Caco-2 (cell line): ENCODE measurements at regions of chr2 and their contacts with region 1.

Region 1: DNA sequence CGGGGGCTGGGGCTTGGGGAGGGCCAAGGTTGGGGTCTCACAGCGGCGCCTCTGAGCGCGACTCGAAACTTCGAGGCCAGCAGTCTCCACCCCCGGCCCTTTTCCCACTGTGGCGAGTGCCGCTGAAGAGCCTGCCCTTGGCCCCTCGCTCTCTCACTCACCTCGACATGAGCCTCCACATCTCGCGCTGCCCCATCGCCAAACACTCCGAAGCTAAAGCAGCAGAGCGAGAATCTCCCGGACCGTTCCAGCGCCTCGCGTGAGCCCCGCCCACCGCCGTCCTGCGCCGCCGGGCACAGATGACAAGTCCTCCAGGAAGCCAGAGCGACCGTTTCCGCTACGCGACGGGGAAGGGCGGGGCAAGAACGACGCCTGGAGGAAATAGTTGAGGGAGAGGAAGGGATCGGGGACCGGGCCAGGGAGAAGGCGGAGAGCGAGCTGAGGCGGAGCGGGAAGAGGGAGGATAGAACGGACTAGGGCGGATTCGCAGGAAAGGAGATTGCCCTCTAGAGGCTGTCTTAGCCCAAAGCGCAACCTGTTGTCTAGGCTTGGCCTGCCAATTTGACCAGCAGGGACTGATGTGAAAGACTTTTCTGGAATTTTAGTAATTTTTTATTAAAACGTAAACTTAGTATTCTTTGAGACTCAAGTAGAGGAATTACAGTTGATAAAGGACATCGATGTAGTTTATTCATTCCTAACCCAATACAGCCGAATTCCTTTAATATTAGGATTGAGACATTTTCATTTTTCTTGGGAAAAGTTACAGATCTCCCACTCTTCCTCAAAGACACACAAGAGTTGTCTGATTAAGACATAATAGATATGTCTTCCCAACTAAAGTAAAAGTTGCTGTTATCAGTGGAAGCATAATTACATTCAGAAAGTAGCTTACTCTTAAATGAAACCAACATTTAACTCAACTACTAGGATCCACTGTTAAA is at the start of gene HIBCH:
- DNase-seq: peak; percentile 99 to 100
- H3K4me3 ChIP-seq: peak within 1 kb of the TSS; percentile 84
- H3K4me3 Mint-ChIP-seq: peak within 1 kb of the TSS; percentile 90
- H3K27ac Mint-ChIP-seq: peak within 1 kb of the TSS; percentile 85
- H3K4me1 ChIP-seq: peaks cover 13% of the 10 kb centered on the region
- H3K4me1 Mint-ChIP-seq: peaks cover 7% of the 10 kb centered on the region
- H3K27me3 ChIP-seq: no peaks in the 10 kb centered on the region
- H3K27me3 Mint-ChIP-seq: no peaks in the 10 kb centered on the region
- CTCF ChIP-seq: peak; percentile 59 to 90
- total RNA-seq, gene HIBCH: 32.0 and 34.4 TPM in 2 replicates

Region 2: DNA sequence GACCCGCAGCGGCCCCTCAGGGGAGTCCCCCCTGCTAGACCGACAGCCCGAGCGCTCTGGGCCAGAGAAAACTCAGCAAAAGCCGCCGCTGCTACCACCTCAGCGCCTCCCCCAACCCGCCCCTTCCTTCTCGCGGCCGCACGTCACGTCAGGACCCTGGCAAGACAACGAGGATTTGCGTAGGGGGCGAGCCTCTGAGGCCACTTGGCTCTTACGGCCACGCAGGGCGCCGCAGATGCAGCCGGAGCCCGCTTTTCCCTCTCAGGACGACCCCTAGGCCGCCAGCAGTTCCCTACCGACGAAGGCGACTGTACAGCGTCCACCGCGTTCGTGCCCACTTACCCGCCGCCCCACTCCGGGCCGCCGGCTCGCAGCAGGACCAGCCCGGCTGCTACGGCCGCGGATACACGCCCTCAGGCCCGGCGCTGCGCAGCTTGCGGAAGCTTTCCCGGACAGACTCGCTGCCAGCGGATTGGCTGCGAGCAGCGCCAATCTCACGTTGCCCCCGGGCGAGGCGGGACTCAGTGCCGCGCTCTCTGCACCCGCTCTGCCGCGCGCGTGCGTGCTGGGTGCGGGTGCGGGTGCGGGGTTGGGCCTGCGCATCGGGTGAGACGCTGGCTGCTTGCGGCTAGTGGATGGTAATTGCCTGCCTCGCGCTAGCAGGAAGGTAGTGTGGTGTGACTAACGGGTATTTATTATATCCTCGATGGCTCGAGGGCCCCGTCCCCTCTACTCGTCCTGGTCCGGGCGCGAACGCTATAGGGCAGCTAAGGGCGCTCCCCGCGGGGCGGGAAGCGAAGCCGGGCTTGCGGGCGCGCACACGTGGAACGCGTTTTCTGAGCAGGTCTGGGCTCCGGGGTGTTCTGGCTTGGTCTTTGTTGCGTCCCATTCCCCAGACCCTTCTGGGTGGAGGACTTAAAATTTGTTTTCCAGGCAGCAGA is 535.6 kb before region 1 on chr2 and contains the starts of genes ORMDL1 and PMS1:
- CTCF ChIA-PET with region 1: no interaction called
- POLR2A ChIA-PET with region 1: no interaction called
- intact Hi-C with region 1: loop called (anchors 1 kb)
- DNase-seq: peak; percentile 95 to 98
- H3K4me3 ChIP-seq: peak within 1 kb of the TSS; percentile 88
- H3K4me3 Mint-ChIP-seq: peak within 1 kb of the TSS; percentile 83
- H3K27ac Mint-ChIP-seq: peak within 1 kb of the TSS; percentile 82
- H3K4me1 ChIP-seq: peaks cover 5% of the 10 kb centered on the region; the same call in 1 of the 2 replicates
- H3K4me1 Mint-ChIP-seq: peaks cover 23% of the 10 kb centered on the region
- H3K27me3 ChIP-seq: no peaks in the 10 kb centered on the region
- H3K27me3 Mint-ChIP-seq: no peaks in the 10 kb centered on the region
- CTCF ChIP-seq: no peak
- total RNA-seq, gene ORMDL1: 52.1 and 52.7 TPM in 2 replicates
- total RNA-seq, gene PMS1: 38.1 and 40.2 TPM in 2 replicates

Region 3: GRCh38 chr2:189982777-189983394 is 336.9 kb before region 1 on chr2:
- CTCF ChIA-PET with region 1: no interaction called
- POLR2A ChIA-PET with region 1: no interaction called
- intact Hi-C with region 1: loop called (anchors 10 kb)
- DNase-seq: peak in 1 of 2 experiments; percentile 19
- H3K4me3 ChIP-seq: no peak overlapping the region
- H3K4me3 Mint-ChIP-seq: no peak overlapping the region
- H3K27ac Mint-ChIP-seq: no peak overlapping the region
- H3K4me1 ChIP-seq: no peaks in the 10 kb centered on the region
- H3K4me1 Mint-ChIP-seq: no peaks in the 10 kb centered on the region
- H3K27me3 ChIP-seq: no peaks in the 10 kb centered on the region
- H3K27me3 Mint-ChIP-seq: no peaks in the 10 kb centered on the region
- CTCF ChIP-seq: peak in 1 of 2 experiments; percentile 54

Region 4: DNA sequence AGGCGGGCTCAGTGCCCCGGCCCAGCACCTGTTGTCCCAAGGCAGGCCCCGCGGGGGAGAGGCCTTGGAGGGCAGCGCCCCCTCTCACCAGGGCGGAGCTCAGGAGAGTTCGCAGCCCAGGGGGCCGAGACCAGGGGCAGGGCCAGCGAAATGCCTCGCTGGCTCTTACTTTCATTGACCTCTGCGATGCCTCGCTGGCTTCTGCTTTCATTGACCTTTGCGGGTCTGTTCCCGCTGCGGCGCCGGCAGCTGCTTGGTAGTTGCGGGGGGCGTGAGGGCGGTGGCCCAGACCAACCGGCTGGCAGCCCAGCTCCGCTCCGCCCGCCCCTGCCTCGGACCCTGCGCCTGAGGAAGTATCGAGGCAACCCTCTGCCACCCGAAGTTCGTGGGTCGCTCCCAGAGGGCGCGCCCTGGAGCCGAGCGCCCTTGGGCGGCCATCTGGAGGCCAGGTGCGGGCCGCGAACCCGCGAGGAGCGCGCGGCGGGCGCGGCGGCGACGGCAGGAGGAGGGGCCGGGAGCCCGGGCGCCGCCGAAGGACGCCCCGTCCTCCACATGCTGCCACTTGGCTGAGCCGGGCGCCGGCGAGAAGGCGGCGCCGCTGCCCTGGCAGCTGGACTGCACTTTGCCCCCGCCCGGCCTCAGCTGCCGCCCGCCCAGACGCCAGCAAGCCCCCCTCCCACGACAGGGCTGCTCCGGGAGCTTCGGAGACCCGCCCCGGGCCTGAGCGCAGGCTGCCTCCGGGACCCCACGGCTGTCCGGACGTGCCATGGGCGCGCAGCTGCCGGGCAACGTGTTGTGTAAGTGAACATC is 139.3 kb before region 1 on chr2:
- CTCF ChIA-PET with region 1: interaction called, 4 read pairs
- POLR2A ChIA-PET with region 1: no interaction called
- intact Hi-C with region 1: loop called (anchors 5 kb)
- DNase-seq: peak; percentile 84 to 89
- H3K4me3 ChIP-seq: peak overlapping the region; percentile 78
- H3K4me3 Mint-ChIP-seq: peak overlapping the region; percentile 83
- H3K27ac Mint-ChIP-seq: no peak overlapping the region
- H3K4me1 ChIP-seq: 0 out of 2 replicates have a peak, but pooled peaks cover 4% of the 10 kb centered on the region
- H3K4me1 Mint-ChIP-seq: peaks cover 6% of the 10 kb centered on the region
- H3K27me3 ChIP-seq: no peaks in the 10 kb centered on the region
- H3K27me3 Mint-ChIP-seq: no peaks in the 10 kb centered on the region
- CTCF ChIP-seq: peak; percentile 47 to 92

Region 5: GRCh38 chr2:190202604-190203003 is 117.2 kb before region 1 on chr2:
- CTCF ChIA-PET with region 1: no interaction called
- POLR2A ChIA-PET with region 1: no interaction called
- intact Hi-C with region 1: loop called (anchors 1 kb)
- DNase-seq: peak in 1 of 2 experiments; percentile 21
- H3K4me3 ChIP-seq: no peak overlapping the region
- H3K4me3 Mint-ChIP-seq: no peak overlapping the region
- H3K27ac Mint-ChIP-seq: peak overlapping the region; percentile 42
- H3K4me1 ChIP-seq: peaks cover 26% of the 10 kb centered on the region
- H3K4me1 Mint-ChIP-seq: peaks cover 26% of the 10 kb centered on the region
- H3K27me3 ChIP-seq: no peaks in the 10 kb centered on the region
- H3K27me3 Mint-ChIP-seq: no peaks in the 10 kb centered on the region
- CTCF ChIP-seq: no peak

Region 6: GRCh38 chr2:190277234-190278112 is 42.4 kb before region 1 on chr2:
- CTCF ChIA-PET with region 1: no interaction called
- POLR2A ChIA-PET with region 1: interaction called, 3 read pairs
- intact Hi-C with region 1: loop called (anchors 1 kb)
- DNase-seq: peak in 1 of 2 experiments; percentile 23
- H3K4me3 ChIP-seq: no peak overlapping the region
- H3K4me3 Mint-ChIP-seq: no peak overlapping the region
- H3K27ac Mint-ChIP-seq: no peak overlapping the region
- H3K4me1 ChIP-seq: peaks cover 27% of the 10 kb centered on the region
- H3K4me1 Mint-ChIP-seq: peaks cover 23% of the 10 kb centered on the region
- H3K27me3 ChIP-seq: no peaks in the 10 kb centered on the region
- H3K27me3 Mint-ChIP-seq: no peaks in the 10 kb centered on the region
- CTCF ChIP-seq: peak; percentile 31 to 39

Region 7: GRCh38 chr2:190343500-190344275 is 23.9 kb after region 1 on chr2 and contains the start of gene INPP1:
- CTCF ChIA-PET with region 1: interaction called, 11 read pairs
- POLR2A ChIA-PET with region 1: interaction called, 4 read pairs
- intact Hi-C with region 1: no loop called
- DNase-seq: peak; percentile 63 to 71
- H3K4me3 ChIP-seq: peak within 1 kb of the TSS; percentile 76
- H3K4me3 Mint-ChIP-seq: peak within 1 kb of the TSS; percentile 95
- H3K27ac Mint-ChIP-seq: peak within 1 kb of the TSS; percentile 91
- H3K4me1 ChIP-seq: no peaks in the 10 kb centered on the region
- H3K4me1 Mint-ChIP-seq: no peaks in the 10 kb centered on the region
- H3K27me3 ChIP-seq: no peaks in the 10 kb centered on the region
- H3K27me3 Mint-ChIP-seq: no peaks in the 10 kb centered on the region
- CTCF ChIP-seq: no peak
- total RNA-seq, gene INPP1: 23.2 TPM in 2 replicates